OCI-LY7 (cell line): ENCODE measurements at regions of chr11 and their contacts with region 1.

Region 1: DNA sequence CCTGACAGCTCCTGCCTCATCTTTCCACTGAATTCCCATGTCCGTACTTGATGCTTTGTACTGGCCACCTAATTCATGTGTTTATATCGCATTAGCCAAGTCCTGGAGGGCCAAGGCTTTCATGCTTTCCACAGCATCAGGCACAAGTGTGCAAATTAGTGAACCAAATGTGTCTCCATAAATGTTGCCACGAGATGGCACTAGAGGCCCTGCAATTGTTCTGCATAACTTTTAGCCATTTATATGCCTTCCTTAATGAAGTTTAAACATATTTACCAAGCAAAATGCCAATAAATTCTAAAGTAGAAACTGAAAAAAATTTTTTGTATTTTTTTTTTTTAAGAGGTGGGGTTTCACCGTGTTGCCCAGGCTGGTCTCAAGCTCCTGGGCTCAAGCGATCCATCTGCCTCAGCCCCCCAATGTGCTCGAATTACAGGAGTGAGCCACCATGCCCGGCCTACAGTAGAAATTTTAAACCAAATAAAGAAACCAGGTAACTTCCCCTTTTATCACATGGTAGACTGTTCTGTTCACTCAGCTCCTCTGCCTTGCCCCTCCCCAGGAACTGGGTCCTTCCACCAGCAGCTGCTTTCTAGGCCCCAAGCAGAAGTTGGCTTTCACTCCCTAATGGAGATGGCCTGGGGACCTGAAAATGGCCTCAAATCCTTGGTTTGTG is 20.8 kb upstream of the IL18BP start:
- DNase-seq: peak; percentile 77
- H3K4me3 ChIP-seq: no peak overlapping the region
- H3K27ac ChIP-seq: peak overlapping the region; percentile 55
- H3K4me1 ChIP-seq: peaks cover 17% of the 10 kb centered on the region
- CTCF ChIP-seq: peak; percentile 92

Region 2: DNA sequence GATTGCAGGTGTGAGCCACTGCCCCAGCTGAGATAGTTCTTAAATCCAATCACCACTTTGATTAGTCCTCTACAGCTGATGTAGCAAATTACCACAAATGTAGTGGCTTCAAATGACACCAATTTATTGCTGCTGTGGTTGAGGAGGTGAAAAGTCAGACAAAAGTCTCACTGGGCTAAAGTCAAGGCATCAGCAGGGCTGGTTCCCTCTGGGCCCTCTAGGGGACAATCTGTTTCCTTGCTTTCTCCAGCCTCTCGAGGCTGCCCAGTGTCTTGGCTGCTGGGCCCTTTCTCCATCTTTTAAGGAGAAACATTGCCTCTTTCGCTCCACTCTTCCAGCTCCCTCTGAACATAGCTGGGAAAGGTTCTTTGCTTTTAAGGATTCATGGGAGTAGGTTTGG is 675.0 kb before region 1 on chr11:
- CTCF ChIA-PET with region 1: no interaction called
- POLR2A ChIA-PET with region 1: no interaction called
- intact Hi-C with region 1: no loop called
- DNase-seq: no peak
- H3K4me3 ChIP-seq: no peak overlapping the region
- H3K27ac ChIP-seq: no peak overlapping the region
- H3K4me1 ChIP-seq: no peaks in the 10 kb centered on the region
- CTCF ChIP-seq: 0 out of 2 replicates have a peak, but pooled peaks have one; percentile 25

Region 3: DNA sequence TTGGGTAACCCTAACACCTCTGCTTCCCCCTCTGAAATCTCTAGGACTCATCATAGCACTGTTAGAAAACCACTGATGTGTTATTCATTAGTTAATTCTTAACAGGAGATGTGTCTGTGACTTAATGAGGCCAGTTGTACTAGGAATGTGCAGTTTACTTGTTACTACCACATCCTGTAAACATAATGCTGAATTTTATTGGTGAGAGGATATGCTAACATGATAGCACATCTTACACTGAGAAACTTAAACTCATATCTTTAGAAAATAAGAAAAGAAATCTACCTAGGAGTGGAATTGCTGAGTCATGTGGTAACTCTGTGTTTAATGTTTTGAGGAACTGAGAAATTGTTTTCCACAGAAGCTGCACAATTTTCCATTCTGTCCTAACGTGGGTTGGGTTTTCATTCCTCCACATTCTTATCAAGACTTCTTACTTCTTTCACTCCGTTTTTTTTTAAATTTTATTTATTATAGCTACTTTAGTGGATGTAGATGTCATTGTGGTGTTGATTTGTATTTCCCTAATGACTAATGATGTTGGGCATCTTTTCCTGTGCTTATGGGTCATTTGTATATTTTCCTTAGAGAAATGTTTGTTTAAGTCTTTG is 15.3 kb before region 1 on chr11:
- CTCF ChIA-PET with region 1: no interaction called
- POLR2A ChIA-PET with region 1: no interaction called
- intact Hi-C with region 1: no loop called
- DNase-seq: peak; percentile 18
- H3K4me3 ChIP-seq: no peak overlapping the region
- H3K27ac ChIP-seq: no peak overlapping the region
- H3K4me1 ChIP-seq: peaks cover 8% of the 10 kb centered on the region
- CTCF ChIP-seq: no peak

Region 4: GRCh38 chr11:72091005-72091691 is 113.3 kb after region 1 on chr11:
- CTCF ChIA-PET with region 1: no interaction called
- POLR2A ChIA-PET with region 1: interaction called, 5 read pairs
- intact Hi-C with region 1: loop called (anchors 2 kb)
- DNase-seq: peak; percentile 83
- H3K4me3 ChIP-seq: no peak overlapping the region
- H3K27ac ChIP-seq: no peak overlapping the region
- H3K4me1 ChIP-seq: peaks cover 6% of the 10 kb centered on the region
- CTCF ChIP-seq: peak; percentile 95

Region 5: GRCh38 chr11:72144807-72145560 is 167.1 kb after region 1 on chr11:
- CTCF ChIA-PET with region 1: no interaction called
- POLR2A ChIA-PET with region 1: interaction called, 5 read pairs
- intact Hi-C with region 1: loop called (anchors 1 kb)
- DNase-seq: no peak
- H3K4me3 ChIP-seq: no peak overlapping the region
- H3K27ac ChIP-seq: no peak overlapping the region
- H3K4me1 ChIP-seq: no peaks in the 10 kb centered on the region
- CTCF ChIP-seq: no peak

Region 6: GRCh38 chr11:72263361-72263760 is 285.5 kb after region 1 on chr11:
- CTCF ChIA-PET with region 1: no interaction called
- POLR2A ChIA-PET with region 1: no interaction called
- intact Hi-C with region 1: no loop called
- DNase-seq: no peak
- H3K4me3 ChIP-seq: no peak overlapping the region
- H3K27ac ChIP-seq: no peak overlapping the region
- H3K4me1 ChIP-seq: peaks cover 8% of the 10 kb centered on the region
- CTCF ChIP-seq: no peak

Region 7: GRCh38 chr11:72287293-72287692 is 309.4 kb after region 1 on chr11:
- CTCF ChIA-PET with region 1: no interaction called
- POLR2A ChIA-PET with region 1: interaction called, 10 read pairs
- intact Hi-C with region 1: no loop called
- DNase-seq: no peak
- H3K4me3 ChIP-seq: no peak overlapping the region
- H3K27ac ChIP-seq: no peak overlapping the region
- H3K4me1 ChIP-seq: no peaks in the 10 kb centered on the region
- CTCF ChIP-seq: no peak